Calu3 (cell line): ENCODE measurements at regions of chr15 and their contacts with region 1.

Region 1: GRCh38 chr15:48358229-48358641 is 27.0 kb downstream of the DUT start:
- DNase-seq: no peak
- H3K4me3 Mint-ChIP-seq: no peak overlapping the region
- H3K27ac Mint-ChIP-seq: no peak overlapping the region
- H3K4me1 Mint-ChIP-seq: peaks cover 17% of the 10 kb centered on the region
- H3K27me3 Mint-ChIP-seq: no peaks in the 10 kb centered on the region
- CTCF ChIP-seq: no peak

Region 2: DNA sequence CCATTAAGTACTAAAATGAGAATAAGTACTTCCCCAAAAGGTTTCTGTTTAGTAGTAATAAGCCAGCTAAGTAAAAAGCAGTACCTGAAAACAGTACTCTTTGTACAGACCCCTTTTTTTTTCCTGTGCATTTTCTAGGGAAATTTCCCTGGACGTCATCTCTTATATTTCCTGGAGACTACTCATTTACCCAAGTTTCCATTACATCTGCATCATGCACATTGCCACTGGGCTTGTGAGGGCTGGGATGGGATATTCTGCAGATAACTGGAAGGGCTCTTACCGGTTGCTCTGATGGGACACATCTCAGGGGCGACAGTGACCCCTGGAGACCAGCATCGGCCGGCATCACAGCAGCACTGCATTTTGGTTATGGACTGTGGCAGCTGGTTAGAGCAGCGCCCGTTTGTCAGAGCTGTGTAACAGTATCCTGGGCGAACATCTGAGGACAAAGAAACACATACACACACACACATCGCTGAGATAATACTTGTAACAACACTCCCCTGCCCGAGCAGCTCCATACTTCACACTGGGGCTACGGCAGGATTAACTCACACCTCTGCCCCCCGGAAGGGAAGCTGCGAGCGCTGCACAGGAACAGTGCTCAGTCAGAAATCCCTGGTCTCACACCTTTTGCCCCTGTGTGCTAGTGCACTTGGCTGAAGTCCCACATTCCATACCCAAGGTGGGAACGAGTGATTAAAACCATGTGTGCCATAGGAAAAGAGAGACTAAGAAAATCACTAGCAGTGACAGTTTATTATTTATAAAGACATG is 162.3 kb after region 1 on chr15:
- CTCF ChIA-PET with region 1: no interaction called
- intact Hi-C with region 1: loop called (anchors 1 kb)
- DNase-seq: peak; percentile 28
- H3K4me3 Mint-ChIP-seq: peak overlapping the region; percentile 30
- H3K27ac Mint-ChIP-seq: no peak overlapping the region
- H3K4me1 Mint-ChIP-seq: no peaks in the 10 kb centered on the region
- H3K27me3 Mint-ChIP-seq: no peaks in the 10 kb centered on the region
- CTCF ChIP-seq: no peak

Region 3: DNA sequence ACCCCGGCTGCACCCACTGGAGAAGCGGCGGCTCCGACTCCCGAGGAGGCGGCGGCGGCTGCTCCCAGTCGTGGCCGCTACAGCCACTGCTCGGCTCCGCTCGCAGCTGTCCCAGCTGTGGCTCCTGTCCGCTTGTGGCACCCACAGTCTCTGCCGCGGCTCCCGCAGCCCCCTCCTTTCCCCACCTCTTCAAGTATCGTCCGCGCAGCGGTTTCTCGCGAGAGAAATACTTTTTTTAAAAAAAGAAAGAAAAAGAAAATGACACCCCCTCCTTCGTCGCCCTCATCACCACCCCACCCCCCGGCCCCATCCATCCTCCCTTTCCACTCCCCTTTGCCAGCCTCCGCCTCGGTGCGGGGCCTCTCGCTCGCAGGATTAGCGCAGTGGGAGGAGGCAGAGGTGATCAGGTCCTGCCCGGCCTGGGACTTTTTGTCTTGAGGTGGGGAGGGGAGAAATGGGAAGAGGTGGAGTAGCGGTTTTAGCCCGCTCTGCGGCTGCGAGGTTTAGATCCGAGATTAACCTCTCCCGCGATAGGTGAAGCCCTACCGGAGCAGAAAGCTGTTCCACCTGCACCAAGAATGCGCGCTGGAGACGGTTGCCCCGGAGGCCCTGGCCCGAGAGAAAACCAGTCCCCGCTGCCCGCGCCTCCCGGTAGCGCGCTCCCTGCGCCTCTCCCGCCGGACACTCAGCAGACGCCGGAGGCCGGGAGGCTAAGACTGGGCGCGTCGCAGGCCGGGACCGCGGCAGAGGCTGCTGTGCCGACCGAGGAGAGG is 287.5 kb after region 1 on chr15 and contains the start of gene FBN1:
- CTCF ChIA-PET with region 1: no interaction called
- intact Hi-C with region 1: loop called (anchors 1 kb)
- DNase-seq: peak; percentile 36
- H3K4me3 Mint-ChIP-seq: peak within 1 kb of the TSS; percentile 58
- H3K27ac Mint-ChIP-seq: no peak within 1 kb of the TSS
- H3K4me1 Mint-ChIP-seq: no peaks in the 10 kb centered on the region
- H3K27me3 Mint-ChIP-seq: peaks cover 35% of the 10 kb centered on the region
- CTCF ChIP-seq: no peak
- total RNA-seq, gene FBN1: 0.93 and 1.1 TPM in 2 replicates

Region 4: GRCh38 chr15:48800811-48801455 is 442.7 kb after region 1 on chr15:
- CTCF ChIA-PET with region 1: no interaction called
- intact Hi-C with region 1: loop called (anchors 1 kb)
- DNase-seq: no peak
- H3K4me3 Mint-ChIP-seq: no peak overlapping the region
- H3K27ac Mint-ChIP-seq: no peak overlapping the region
- H3K4me1 Mint-ChIP-seq: peaks cover 29% of the 10 kb centered on the region
- H3K27me3 Mint-ChIP-seq: no peaks in the 10 kb centered on the region
- CTCF ChIP-seq: no peak

Region 5: GRCh38 chr15:48855501-48856440 is 497.5 kb after region 1 on chr15:
- CTCF ChIA-PET with region 1: no interaction called
- intact Hi-C with region 1: loop called (anchors 2 kb)
- DNase-seq: peak; percentile 35
- H3K4me3 Mint-ChIP-seq: no peak overlapping the region
- H3K27ac Mint-ChIP-seq: no peak overlapping the region
- H3K4me1 Mint-ChIP-seq: peaks cover 21% of the 10 kb centered on the region
- H3K27me3 Mint-ChIP-seq: no peaks in the 10 kb centered on the region
- CTCF ChIP-seq: no peak